ENCODE measurements at regions of chr20 and their contacts with region 1.

Region 1: GRCh38 chr20:44115762-44116644 is 71.0 kb downstream of the JPH2 start:
- DNase-seq: no peak
- H3K4me3 Mint-ChIP-seq: no peak overlapping the region
- H3K27ac Mint-ChIP-seq: no peak overlapping the region
- H3K4me1 Mint-ChIP-seq: peaks cover 2% of the 10 kb centered on the region
- H3K27me3 Mint-ChIP-seq: peaks cover 15% of the 10 kb centered on the region

Region 2: GRCh38 chr20:44187051-44187762 is 71.2 kb after region 1 on chr20 and contains the start of gene JPH2:
- intact Hi-C with region 1: loop called (anchors 1 kb)
- DNase-seq: no peak
- H3K4me3 Mint-ChIP-seq: no peak within 1 kb of the TSS
- H3K27ac Mint-ChIP-seq: no peak within 1 kb of the TSS
- H3K4me1 Mint-ChIP-seq: peaks cover 4% of the 10 kb centered on the region
- H3K27me3 Mint-ChIP-seq: peaks cover 48% of the 10 kb centered on the region
- total RNA-seq, gene JPH2: 0.11 TPM in 1 of 2 replicates, not detected in the other